ENCODE measurements at regions of chr11 and their contacts with region 1.

Region 1: GRCh38 chr11:73760679-73761402 is at the start of gene RAB6A:
- DNase-seq: peak; percentile 100
- ATAC-seq: peak; percentile 93
- H3K4me3 Mint-ChIP-seq: peak within 1 kb of the TSS; percentile 97
- H3K27ac Mint-ChIP-seq: peak within 1 kb of the TSS; percentile 86
- H3K4me1 Mint-ChIP-seq: peaks cover 22% of the 10 kb centered on the region
- H3K27me3 Mint-ChIP-seq: no peaks in the 10 kb centered on the region
- total RNA-seq, gene RAB6A: 57.9 to 58.9 TPM

Region 2: GRCh38 chr11:73141848-73142286 is 619.0 kb before region 1 on chr11:
- CTCF ChIA-PET with region 1: no interaction called
- POLR2A ChIA-PET with region 1: no interaction called
- intact Hi-C with region 1: loop called in 1 of 2 experiments (anchors 5 kb)
- DNase-seq: peak; percentile 73
- ATAC-seq: peak; percentile 17
- H3K4me3 Mint-ChIP-seq: peak overlapping the region; percentile 92
- H3K27ac Mint-ChIP-seq: peak overlapping the region; percentile 82
- H3K4me1 Mint-ChIP-seq: peaks cover 40% of the 10 kb centered on the region
- H3K27me3 Mint-ChIP-seq: no peaks in the 10 kb centered on the region

Region 3: DNA sequence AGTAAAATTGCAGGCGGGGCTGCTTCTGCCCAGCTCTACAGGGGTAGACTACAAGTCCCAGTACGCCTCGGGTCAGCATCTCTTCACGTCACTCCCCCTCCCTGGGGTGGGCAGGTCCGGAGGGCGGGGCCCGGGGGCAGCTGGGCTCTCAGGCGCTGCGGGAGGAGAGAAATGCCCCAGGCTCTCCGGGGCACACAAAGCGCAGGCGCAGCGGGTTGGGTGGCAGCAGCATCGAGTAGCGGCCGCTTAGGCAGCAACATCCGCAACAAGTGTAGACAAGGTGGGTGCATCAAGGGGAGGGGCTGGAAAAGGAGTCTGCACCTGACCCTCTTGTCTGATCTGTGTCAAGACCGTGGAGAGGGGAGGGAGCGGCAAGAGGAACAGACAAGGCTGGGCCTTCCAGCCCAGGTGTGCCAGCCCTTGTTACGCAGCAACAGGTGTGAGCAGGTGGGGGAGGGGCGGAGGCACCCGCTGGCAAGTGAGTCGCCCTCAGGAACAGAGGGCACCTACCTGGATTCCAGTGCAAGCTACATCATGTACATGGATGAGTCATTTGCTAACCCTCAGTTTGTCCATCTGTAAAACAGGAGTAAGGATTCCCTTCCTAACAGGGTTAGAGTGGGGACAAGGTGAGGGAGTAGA is 113.3 kb before region 1 on chr11:
- CTCF ChIA-PET with region 1: no interaction called
- POLR2A ChIA-PET with region 1: no interaction called
- intact Hi-C with region 1: loop called in 1 of 2 experiments (anchors 1 kb)
- DNase-seq: peak; percentile 96
- ATAC-seq: peak; percentile 100
- H3K4me3 Mint-ChIP-seq: peak overlapping the region; percentile 75
- H3K27ac Mint-ChIP-seq: peak overlapping the region; percentile 86
- H3K4me1 Mint-ChIP-seq: peaks cover 15% of the 10 kb centered on the region
- H3K27me3 Mint-ChIP-seq: no peaks in the 10 kb centered on the region

Region 4: DNA sequence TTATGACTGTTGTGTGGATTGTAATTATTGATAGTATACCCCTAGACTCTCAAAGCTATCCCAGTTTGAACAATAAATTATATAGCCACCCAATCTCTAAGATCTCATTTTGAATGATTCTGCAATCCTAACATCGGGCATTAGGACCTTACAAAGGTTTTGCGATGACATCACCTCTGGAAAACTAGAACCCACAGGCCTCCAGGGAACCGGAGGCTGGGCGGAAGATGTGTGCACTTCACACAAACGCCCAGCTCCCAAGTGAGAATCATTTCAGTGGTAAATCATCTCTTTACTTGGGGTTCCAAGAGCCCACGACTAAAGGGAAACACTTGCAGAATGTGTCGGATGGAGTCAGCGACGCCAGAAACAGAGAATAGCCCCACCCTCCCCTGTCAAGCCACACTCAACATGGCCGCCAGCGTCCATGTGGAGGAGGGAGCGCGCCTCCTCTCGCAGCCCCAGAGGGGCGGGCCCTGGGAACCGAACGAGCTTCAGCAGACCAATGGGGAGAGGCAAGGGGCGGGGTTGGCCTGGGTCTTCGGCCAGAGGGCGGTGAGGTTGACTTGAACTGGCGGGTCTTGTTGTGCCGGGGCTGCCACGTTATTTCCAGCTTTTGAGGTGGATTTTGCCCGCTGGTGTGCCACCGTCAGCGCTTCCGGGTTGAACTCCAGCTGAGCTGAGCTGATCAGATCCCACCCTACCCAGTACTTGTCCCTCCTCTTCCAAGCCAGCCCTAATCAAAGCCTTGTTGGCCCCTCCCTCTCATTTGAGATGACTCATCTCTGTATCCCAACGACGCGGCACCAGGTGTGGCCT is 18.5 kb after region 1 on chr11:
- CTCF ChIA-PET with region 1: interaction called, 53 read pairs
- POLR2A ChIA-PET with region 1: interaction called, 40 read pairs
- intact Hi-C with region 1: loop called (anchors 1 kb)
- DNase-seq: peak; percentile 100
- ATAC-seq: peak; percentile 97
- H3K4me3 Mint-ChIP-seq: peak overlapping the region; percentile 80
- H3K27ac Mint-ChIP-seq: peak overlapping the region; percentile 98
- H3K4me1 Mint-ChIP-seq: peaks cover 10% of the 10 kb centered on the region
- H3K27me3 Mint-ChIP-seq: no peaks in the 10 kb centered on the region

Region 5: GRCh38 chr11:73787643-73788537 is 27.0 kb after region 1 on chr11 and contains the start of gene MRPL48:
- CTCF ChIA-PET with region 1: interaction called, 3 read pairs
- POLR2A ChIA-PET with region 1: no interaction called
- intact Hi-C with region 1: loop called in 1 of 2 experiments (anchors 2 kb)
- DNase-seq: peak; percentile 95
- ATAC-seq: peak; percentile 99
- H3K4me3 Mint-ChIP-seq: peak within 1 kb of the TSS; percentile 92
- H3K27ac Mint-ChIP-seq: peak within 1 kb of the TSS; percentile 99
- H3K4me1 Mint-ChIP-seq: peaks cover 9% of the 10 kb centered on the region
- H3K27me3 Mint-ChIP-seq: no peaks in the 10 kb centered on the region
- total RNA-seq, gene MRPL48: 48.5 to 52.0 TPM

Region 6: DNA sequence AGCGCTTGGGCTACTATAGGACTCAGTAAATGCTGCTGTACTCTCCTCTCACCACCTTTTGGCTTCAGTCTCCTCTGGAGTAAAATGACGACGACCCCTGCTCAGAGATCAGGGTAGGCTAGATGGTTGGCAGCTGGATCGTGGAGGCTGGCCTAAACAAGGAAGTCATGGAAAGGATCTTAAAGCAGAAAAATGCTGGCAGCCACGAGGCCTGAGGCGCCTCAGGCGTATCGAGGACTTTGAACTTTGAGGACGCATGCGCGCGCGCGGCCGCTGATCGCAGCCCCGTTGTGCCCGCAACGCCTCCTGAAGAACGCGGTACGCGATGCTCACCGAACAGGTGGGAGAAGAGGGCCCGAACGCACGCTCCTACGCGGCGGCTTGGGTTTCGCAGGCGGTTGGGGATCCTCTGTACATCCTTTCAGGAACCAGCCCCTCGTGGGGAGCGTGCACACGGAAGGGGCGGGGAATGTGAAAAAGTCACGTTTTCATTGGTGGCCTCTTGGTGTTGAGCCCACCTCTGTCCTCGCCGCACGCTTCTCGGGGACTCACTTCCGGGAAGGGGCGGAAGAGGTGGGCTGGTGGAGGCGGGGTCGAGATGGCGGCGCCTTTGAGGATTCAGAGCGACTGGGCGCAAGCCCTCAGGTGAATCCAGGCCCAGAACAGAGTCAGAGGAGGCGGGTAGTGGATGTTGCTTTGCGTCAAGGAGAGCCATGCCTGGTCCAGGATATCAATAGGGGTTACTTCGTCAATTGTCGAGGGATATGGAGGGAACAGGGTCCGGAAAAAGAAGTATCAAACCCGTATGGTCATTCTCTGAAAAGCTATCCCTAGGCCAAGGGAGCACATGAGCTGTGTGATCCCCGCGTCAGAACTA is 115.8 kb after region 1 on chr11 and contains the starts of genes COA4 and PAAF1:
- CTCF ChIA-PET with region 1: no interaction called
- POLR2A ChIA-PET with region 1: interaction called, 4 read pairs
- intact Hi-C with region 1: loop called (anchors 1 kb)
- DNase-seq: peak; percentile 97
- ATAC-seq: peak; percentile 95
- H3K4me3 Mint-ChIP-seq: peak within 1 kb of the TSS; percentile 93
- H3K27ac Mint-ChIP-seq: peak within 1 kb of the TSS; percentile 100
- H3K4me1 Mint-ChIP-seq: peaks cover 32% of the 10 kb centered on the region
- H3K27me3 Mint-ChIP-seq: no peaks in the 10 kb centered on the region
- total RNA-seq, gene COA4: 103 to 112 TPM
- total RNA-seq, gene PAAF1: 34.2 to 34.8 TPM

Region 7: GRCh38 chr11:74159642-74160041 is 398.8 kb after region 1 on chr11:
- CTCF ChIA-PET with region 1: no interaction called
- POLR2A ChIA-PET with region 1: no interaction called
- intact Hi-C with region 1: no loop called
- DNase-seq: no peak
- ATAC-seq: no peak
- H3K4me3 Mint-ChIP-seq: no peak overlapping the region
- H3K27ac Mint-ChIP-seq: no peak overlapping the region
- H3K4me1 Mint-ChIP-seq: peaks cover 10% of the 10 kb centered on the region
- H3K27me3 Mint-ChIP-seq: no peaks in the 10 kb centered on the region

Region 8: DNA sequence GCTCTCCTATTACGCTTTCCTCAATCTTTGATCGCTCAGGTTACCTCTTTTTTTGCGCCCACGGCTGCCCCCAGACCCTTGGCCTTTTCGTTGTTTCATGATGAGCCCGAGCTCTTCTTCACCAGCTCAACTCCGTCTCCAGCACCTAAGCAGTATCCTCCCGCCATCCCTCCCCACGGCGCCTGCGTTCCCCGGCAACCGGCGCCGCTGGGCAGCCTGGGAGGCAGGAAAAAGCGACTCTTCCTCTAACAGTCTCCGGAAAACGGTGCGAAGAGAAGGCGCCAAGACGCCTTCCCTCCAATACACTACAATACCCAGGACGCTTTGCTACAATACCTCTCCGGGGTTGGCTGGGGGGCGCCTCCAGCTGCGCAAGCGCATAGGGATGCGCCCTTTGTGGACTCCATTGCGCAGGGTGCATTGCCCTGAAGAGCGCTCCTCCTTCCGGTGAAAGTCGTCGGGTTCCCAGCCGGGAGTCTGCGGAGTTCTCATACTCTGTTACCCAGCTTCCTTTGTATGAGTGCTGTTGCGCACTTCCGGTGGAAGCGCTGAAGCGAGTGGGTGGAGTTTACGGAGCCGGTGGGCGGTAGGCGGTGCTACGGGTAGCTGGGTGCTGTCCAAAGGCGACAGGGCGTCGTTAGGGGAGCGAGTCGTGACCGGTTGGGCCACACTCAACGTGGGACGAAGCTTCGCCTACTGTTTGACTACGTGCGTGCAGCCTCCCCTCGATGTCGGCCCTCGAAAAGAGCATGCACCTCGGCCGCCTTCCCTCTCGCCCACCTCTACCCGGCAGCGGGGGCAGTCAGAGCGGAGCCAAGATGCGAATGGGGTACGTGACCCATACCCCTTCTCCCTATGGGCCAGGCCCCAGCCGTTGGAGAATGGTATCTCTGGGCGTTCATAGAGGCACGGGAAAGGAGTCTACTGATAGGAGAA is 410.1 kb after region 1 on chr11 and contains the starts of genes C2CD3 and PPME1:
- CTCF ChIA-PET with region 1: no interaction called
- POLR2A ChIA-PET with region 1: interaction called, 4 read pairs
- intact Hi-C with region 1: loop called (anchors 1 to 2 kb)
- DNase-seq: peak; percentile 98
- ATAC-seq: peak; percentile 96
- H3K4me3 Mint-ChIP-seq: no peak within 1 kb of the TSS
- H3K27ac Mint-ChIP-seq: no peak within 1 kb of the TSS
- H3K4me1 Mint-ChIP-seq: peaks cover 16% of the 10 kb centered on the region
- H3K27me3 Mint-ChIP-seq: no peaks in the 10 kb centered on the region
- total RNA-seq, gene C2CD3: 23.9 to 28.0 TPM
- total RNA-seq, gene PPME1: 54.2 to 61.5 TPM

Measured in activated CD4-positive, alpha-beta T cell treated with anti-CD3 and anti-CD28 coated beads for 36 hours (primary cell).